ENCODE measurements at regions of chr16 and their contacts with region 1.

Region 1: DNA sequence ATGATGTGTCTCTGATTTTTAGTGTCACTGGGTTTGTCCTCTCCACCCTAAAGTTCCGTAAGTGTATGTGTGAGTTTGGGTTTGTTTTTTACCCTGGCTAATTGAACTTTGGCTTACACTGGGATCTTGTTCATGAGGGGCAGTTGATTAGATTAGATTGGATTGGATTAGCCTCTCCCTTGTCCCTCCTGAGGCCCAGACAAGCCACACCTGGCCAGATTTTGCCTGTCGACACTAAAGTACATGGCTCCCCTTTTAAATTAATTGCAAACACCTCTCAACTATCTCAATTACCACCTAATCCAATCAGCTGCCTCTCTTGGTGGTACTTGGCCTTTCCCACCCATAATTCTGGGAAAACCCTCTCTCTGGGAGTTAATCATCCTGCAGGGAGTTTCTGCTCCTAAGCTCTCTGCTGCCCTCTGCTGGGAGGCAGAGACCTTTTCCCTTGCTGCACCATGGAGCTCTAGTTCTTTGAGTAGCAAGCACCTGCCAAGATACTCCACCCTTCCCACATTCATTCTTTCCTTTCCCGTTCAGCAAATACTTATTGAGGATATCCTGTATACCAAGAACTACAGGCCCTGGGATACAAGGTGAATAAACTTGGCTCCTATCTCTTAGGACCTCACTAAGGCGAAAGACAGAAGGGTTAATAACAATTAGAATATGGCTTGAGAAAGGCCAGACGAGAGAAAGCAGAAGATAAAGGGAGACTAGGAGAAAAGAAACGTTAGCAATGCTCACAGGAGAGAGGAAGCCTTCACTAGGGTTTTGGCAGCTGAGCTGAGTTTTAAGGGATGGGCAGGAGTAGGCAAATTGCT is 60.0 kb upstream of the MPHOSPH6 start:
- DNase-seq: peak; percentile 64
- ATAC-seq: no peak

Region 2: DNA sequence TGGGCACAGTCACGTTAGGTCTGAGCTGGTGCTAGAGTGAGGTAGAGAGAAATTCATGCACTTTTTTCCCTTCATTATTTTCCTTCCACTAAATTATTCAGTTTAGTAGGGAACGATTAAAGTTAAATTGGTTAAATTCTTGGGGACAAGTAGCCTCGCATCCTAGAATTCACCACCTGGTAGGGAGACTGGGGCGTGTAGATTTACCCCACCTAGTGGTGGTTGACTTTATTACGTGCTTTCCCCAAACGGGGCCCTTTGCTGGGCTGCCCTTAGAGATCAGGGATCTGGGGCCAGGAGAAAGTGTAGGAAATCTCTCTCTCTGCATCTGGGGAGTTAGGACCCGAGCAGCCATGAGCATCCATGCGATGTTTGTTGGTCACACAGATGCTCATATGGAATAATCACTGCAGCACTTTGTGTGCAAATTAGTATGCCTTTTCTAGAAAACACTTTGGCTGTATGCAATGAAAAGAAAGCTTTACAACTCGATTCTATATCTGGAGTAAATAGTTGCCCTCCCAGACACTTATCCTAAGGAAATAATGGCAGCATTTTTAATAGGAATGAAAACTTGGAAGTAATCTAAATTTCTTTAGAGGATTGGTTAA is 343.9 kb before region 1 on chr16:
- intact Hi-C with region 1: loop called (anchors 1 kb)
- DNase-seq: no peak
- ATAC-seq: no peak

Region 3: GRCh38 chr16:81940781-81941560 is 289.0 kb before region 1 on chr16:
- intact Hi-C with region 1: loop called (anchors 1 kb)
- DNase-seq: no peak
- ATAC-seq: no peak

Region 4: GRCh38 chr16:82011199-82011641 is 218.8 kb before region 1 on chr16 and contains the start of gene SDR42E1:
- intact Hi-C with region 1: no loop called
- DNase-seq: no peak
- ATAC-seq: no peak
- total RNA-seq, gene SDR42E1: 0.43 TPM

Region 5: GRCh38 chr16:82031116-82032084 is 198.6 kb before region 1 on chr16:
- intact Hi-C with region 1: loop called (anchors 5 kb)
- DNase-seq: no peak
- ATAC-seq: no peak

Region 6: DNA sequence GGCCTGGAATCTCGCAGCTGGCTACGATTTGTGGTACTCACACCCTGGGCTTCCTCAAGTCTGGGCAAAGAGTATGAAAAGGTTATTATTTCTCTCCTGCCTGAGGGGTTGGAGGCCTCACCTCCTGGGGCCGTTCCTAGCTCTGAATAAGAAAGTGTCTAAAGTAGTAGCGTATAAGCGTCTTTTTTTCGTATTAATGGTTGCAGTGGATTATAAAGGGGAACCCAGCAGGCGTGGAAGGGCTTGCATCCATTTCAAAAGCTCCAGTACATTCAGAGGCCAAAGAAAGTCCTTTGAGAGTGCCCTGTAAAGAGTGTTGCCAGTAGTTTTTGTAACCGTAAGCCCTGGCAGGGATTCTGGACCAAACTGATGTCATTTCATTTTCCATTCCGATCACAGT is 12.2 kb after region 1 on chr16:
- intact Hi-C with region 1: no loop called
- DNase-seq: no peak
- ATAC-seq: no peak

Measured in Right ventricle myocardium inferior (tissue), 1 donor.